Activated CD4-positive, alpha-beta T cell treated with anti-CD3 and anti-CD28 coated beads, Interleukin-2, amount 10 ng/mL, durations not matched to agents 7 days and 5 days (primary cell): ENCODE measurements at regions of chr5 and their contacts with region 1.

Region 1: DNA sequence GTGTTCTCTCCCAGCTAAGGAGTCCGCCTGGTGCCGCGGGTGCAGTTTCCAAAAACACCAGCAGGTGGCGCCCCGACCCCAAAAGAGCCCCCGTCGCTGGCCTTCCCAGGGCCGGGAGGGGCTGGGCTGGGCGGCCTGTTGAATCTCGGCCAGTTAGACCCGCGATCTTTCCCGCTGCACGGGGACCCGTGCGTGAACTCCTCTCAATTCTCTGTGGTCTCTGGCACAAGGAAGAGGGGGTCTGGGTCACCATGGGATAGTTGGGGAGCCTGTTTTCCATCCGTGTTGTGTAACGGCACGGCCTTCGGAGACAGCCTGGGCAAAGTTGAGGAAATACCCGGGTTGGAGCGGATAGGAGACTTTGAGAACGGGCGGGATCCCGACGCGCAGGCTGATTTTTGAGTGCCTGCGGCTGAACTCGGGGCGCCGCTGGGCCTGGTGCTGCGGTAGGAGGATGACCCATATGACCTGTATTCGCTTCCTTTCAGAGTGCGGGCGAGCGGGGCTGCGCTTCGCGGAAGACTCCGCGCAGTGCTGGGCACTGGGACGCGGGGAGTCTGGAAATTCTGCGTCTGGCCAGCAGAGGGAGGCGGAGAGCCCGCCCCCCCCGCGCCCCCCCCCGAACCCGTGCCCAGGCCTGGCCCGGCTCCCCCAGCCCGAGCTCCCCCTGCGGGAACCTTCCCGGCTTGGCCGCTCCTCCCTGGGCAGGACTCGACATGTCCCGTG is 7.9 kb upstream of the PSD2 start:
- DNase-seq: peak; percentile 78
- H3K4me3 Mint-ChIP-seq: peak overlapping the region; percentile 70
- H3K27ac Mint-ChIP-seq: no peak overlapping the region
- H3K4me1 Mint-ChIP-seq: peaks cover 3% of the 10 kb centered on the region
- H3K27me3 Mint-ChIP-seq: peaks cover 36% of the 10 kb centered on the region

Region 2: GRCh38 chr5:139765409-139766217 is 22.1 kb before region 1 on chr5:
- CTCF ChIA-PET with region 1: interaction called, 16 read pairs
- POLR2A ChIA-PET with region 1: no interaction called
- DNase-seq: peak; percentile 84
- H3K4me3 Mint-ChIP-seq: peak overlapping the region; percentile 62
- H3K27ac Mint-ChIP-seq: no peak overlapping the region
- H3K4me1 Mint-ChIP-seq: peaks cover 11% of the 10 kb centered on the region
- H3K27me3 Mint-ChIP-seq: peaks cover 41% of the 10 kb centered on the region

Region 3: DNA sequence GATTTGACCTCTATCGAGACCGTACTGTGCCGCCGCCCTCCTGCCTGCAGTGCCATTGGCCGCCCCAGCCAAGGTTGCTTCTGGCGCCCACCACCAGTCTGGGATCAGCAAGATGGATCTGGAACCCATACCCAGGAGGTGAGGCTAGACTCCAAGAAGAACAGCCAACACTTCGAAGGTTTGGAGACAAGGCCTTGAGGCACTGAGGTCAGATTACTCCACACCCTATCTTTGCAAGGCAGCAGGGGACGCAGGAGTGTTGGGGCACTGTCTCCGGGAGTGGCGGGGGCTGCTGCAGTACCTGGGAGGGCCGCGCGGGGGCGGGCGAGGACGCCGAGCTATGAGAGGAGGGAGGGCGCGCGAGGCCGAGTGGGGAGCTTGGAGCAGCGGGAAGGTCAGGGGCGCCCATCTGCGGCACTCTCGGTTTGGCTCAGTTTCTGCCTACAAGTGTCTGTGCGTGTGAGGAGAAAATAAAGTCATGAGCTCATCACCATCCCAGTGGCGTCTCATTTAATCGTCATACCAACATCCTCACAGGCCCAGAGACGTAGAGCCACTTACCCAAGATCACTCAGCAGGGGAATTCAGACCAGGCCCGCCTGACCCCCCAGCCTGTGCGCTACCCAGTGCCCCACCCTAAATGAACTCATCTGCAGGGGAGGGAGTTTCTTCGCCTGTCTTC is 12.6 kb before region 1 on chr5:
- CTCF ChIA-PET with region 1: interaction called, 10 read pairs
- POLR2A ChIA-PET with region 1: no interaction called
- DNase-seq: peak; percentile 74
- H3K4me3 Mint-ChIP-seq: no peak overlapping the region
- H3K27ac Mint-ChIP-seq: no peak overlapping the region
- H3K4me1 Mint-ChIP-seq: peaks cover 7% of the 10 kb centered on the region
- H3K27me3 Mint-ChIP-seq: peaks cover 18% of the 10 kb centered on the region

Region 4: DNA sequence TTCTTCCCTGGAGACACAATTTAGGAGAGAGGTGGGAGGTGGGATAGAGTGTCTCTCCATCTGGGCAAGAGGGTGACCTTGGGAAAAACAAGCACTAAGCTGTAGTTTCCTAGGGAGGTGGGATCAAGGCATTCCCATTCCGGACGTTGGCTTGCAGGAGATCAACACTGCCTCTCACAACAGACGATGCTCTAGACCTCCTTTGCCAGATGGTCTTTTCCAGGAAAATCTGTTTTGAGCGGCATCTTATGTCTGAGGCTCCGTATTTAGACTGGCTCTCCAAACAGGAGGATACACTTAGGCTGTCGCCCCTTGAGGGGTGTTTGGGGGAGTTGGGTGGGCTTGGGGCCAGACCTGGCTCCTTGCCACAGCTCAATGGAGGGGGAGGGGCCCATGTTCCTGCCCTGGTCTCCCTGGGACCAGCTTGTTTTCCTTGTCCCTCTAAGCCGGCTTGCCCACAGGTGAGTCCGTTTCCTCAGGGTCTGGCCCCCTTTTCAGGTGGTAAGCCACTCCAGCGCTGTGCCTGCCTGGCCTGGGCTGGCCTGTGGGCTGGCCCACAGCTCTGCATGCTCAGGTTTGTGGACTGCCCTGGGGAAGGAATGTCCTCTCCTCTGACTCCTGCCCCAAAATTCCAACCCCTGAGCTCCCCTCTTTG is 10.3 kb after region 1 on chr5:
- CTCF ChIA-PET with region 1: interaction called, 10 read pairs
- POLR2A ChIA-PET with region 1: no interaction called
- DNase-seq: no peak
- H3K4me3 Mint-ChIP-seq: no peak overlapping the region
- H3K27ac Mint-ChIP-seq: no peak overlapping the region
- H3K4me1 Mint-ChIP-seq: peaks cover 3% of the 10 kb centered on the region
- H3K27me3 Mint-ChIP-seq: peaks cover 63% of the 10 kb centered on the region

Region 5: DNA sequence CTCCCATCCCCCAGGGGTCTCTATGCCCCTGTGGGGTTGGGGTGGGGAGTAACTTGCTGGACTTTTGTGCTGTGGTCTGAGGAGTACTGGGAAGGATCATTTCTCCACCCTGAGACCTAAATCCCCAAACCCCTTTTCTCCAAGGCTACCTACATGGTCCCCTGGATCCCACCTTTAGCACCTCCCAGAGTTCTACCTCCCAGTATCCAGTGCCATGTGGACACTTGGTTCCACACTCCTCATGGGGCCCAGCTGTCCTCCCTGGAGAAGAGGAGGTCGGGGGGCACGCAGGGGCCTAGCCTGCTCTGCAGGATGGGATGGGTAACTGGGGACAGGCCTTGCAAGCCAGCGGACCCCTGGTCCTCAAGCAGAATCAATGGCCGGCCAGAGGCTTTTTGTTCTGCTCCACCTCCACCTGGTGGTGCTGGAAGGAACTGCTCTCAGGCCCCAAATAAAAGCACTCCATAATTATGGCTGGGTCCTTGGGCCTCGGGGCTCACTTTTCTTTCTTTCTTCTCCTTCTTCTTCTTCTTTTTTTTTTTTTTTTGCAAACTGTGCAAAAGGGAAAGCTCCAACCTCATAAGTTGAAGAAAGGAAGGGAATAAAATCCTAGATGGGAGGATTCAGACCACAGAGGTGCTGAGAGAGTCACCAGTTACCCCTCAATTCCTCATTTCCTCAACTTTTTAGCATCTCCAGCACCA is 76.3 kb after region 1 on chr5:
- CTCF ChIA-PET with region 1: interaction called, 19 read pairs
- POLR2A ChIA-PET with region 1: no interaction called
- DNase-seq: peak; percentile 57
- H3K4me3 Mint-ChIP-seq: no peak overlapping the region
- H3K27ac Mint-ChIP-seq: no peak overlapping the region
- H3K4me1 Mint-ChIP-seq: no peaks in the 10 kb centered on the region
- H3K27me3 Mint-ChIP-seq: peaks cover 10% of the 10 kb centered on the region

Region 6: DNA sequence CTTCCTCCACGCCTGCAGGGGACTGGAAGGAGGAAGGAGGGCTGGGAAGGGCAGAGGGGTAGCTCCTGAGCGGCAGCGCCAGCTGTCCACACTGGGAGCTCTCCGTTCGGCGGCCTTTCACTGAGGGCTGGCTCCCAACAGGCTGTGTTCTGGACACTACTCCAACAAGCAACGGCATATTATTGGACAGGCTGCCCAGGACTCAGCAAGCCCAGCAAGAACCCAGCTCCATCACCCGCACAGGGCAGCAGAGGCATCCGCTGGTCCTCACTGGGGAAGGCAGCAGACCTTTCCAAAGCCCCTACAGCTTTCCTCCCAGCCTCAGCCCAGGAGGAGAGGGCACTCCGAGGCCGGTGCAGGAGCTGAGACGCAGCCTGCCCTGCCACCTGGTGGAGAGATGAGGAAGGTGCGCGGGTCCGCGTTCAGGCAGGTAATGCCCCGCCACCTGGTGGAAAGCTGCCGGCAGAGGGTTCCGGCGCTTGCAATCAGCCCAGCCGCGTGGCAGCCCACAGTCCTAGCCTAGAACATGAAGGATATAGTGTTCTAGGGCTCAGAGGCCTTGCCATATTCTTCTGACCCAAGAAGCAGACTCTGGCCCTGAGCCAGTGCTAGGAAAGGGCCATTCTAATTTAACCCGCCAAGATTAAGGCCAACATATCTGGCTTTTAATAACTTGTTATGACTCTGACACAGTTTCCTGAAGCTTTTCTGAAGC is 181.0 kb after region 1 on chr5:
- CTCF ChIA-PET with region 1: interaction called, 53 read pairs
- POLR2A ChIA-PET with region 1: no interaction called
- DNase-seq: peak; percentile 90
- H3K4me3 Mint-ChIP-seq: no peak overlapping the region
- H3K27ac Mint-ChIP-seq: no peak overlapping the region
- H3K4me1 Mint-ChIP-seq: peaks cover 4% of the 10 kb centered on the region
- H3K27me3 Mint-ChIP-seq: peaks cover 25% of the 10 kb centered on the region